AG04449 (cell line): ENCODE measurements at regions of chr1 and their contacts with region 1.

Region 1: GRCh38 chr1:44631647-44632539 is 42.4 kb downstream of the TMEM53 start:
- DNase-seq: no peak
- H3K4me3 ChIP-seq: peak overlapping the region; percentile 72
- CTCF ChIP-seq: no peak

Region 2: DNA sequence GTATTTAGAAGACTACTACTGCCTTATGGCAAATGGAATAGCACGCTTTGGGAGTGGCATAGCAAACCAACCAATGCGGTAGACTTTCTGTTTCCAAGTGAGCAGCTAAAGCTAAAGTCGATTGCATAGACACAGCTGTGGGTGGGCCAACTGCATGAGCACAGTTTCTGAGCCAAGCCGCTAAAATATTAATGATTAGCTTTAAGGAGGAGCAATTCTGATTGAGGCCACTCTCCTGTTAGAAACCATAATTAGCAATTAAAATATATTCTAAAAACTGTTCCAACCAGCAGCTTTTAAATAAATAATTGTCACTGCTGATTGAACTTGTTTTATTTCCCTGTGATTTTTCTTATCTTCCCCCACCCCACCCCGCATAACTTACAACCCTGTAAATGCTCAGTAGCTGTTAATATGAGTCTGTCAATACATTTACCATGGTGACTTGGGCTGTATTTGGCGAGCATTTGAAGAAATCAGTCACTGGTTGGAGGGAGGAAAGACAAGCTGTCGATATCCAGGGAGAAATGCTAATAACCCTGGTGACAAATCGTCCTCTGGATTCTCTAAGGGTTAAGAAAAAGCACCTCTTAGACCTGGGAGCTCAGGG is 194.7 kb before region 1 on chr1:
- CTCF ChIA-PET with region 1: no interaction called
- POLR2A ChIA-PET with region 1: no interaction called
- DNase-seq: no peak
- H3K4me3 ChIP-seq: no peak overlapping the region
- CTCF ChIP-seq: no peak

Region 3: DNA sequence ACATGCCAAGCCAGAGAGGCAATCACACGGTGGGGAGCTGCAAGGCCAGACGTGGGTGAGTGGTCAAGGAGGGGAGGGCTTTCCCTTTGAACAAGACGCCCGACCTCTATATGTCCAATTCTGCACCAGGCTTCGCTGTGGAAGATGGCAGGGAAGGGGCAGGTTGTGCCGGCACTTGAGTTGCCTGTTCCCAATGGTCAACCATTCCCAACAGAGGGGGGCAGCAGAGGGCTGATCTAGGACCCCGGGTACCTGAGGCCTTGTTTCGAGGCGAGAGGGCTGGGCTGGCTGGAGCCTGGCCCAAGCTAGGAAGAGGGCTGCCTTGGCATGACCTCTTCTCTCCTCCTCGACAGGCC is 22.5 kb before region 1 on chr1:
- CTCF ChIA-PET with region 1: interaction called, 52 read pairs
- POLR2A ChIA-PET with region 1: interaction called, 3 read pairs
- DNase-seq: no peak
- H3K4me3 ChIP-seq: no peak overlapping the region
- CTCF ChIP-seq: peak; percentile 79

Region 4: GRCh38 chr1:44616991-44617702 is 14.7 kb before region 1 on chr1:
- CTCF ChIA-PET with region 1: interaction called, 41 read pairs
- POLR2A ChIA-PET with region 1: interaction called, 14 read pairs
- DNase-seq: no peak
- H3K4me3 ChIP-seq: peak overlapping the region; percentile 48
- CTCF ChIP-seq: no peak

Region 5: GRCh38 chr1:44646261-44647110 is 14.6 kb after region 1 on chr1:
- CTCF ChIA-PET with region 1: interaction called, 245 read pairs
- POLR2A ChIA-PET with region 1: interaction called, 11 read pairs
- DNase-seq: no peak
- H3K4me3 ChIP-seq: no peak overlapping the region
- CTCF ChIP-seq: no peak

Region 6: DNA sequence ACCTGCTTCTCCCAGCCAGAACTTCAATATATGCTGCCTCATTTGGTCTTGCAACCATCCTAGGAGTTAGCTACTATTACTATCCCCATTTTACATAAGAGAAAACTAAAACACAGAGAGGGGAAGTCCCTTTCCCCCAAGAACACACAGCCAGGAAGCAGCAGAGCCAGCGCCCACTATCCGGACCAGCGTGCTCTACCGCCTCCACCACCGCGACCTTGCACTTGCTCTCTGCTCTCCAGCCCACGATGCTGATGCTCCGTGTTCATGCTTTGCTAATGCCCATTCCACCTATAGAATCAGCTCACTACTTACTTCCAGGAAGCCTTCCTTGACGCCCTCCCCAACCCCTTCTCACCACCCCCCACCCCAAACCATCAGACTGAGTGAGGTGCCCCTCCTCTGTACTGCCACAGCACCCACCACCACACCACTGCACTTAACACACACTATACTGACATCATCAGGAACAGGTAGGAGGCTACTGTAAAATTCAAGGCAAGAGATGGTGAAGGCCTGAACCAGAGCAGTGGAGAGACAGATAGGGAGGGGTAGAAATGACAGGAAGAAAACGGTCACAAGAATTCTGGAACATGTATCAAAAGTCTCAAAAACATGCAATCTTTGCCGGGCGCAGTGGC is 33.0 kb after region 1 on chr1:
- CTCF ChIA-PET with region 1: no interaction called
- POLR2A ChIA-PET with region 1: no interaction called
- DNase-seq: no peak
- H3K4me3 ChIP-seq: no peak overlapping the region
- CTCF ChIP-seq: no peak